Mammary epithelial cell (primary cell): ENCODE measurements at regions of chr17 and their contacts with region 1.

Region 1: GRCh38 chr17:75927286-75927922 is 13.4 kb downstream of the FBF1 start:
- DNase-seq: peak; percentile 9
- H3K4me3 ChIP-seq: no peak overlapping the region
- H3K27ac ChIP-seq: no peak overlapping the region
- H3K4me1 ChIP-seq: peaks cover 9% of the 10 kb centered on the region
- H3K27me3 ChIP-seq: no peaks in the 10 kb centered on the region
- CTCF ChIP-seq: peak in 1 of 2 donors; percentile 47

Region 2: DNA sequence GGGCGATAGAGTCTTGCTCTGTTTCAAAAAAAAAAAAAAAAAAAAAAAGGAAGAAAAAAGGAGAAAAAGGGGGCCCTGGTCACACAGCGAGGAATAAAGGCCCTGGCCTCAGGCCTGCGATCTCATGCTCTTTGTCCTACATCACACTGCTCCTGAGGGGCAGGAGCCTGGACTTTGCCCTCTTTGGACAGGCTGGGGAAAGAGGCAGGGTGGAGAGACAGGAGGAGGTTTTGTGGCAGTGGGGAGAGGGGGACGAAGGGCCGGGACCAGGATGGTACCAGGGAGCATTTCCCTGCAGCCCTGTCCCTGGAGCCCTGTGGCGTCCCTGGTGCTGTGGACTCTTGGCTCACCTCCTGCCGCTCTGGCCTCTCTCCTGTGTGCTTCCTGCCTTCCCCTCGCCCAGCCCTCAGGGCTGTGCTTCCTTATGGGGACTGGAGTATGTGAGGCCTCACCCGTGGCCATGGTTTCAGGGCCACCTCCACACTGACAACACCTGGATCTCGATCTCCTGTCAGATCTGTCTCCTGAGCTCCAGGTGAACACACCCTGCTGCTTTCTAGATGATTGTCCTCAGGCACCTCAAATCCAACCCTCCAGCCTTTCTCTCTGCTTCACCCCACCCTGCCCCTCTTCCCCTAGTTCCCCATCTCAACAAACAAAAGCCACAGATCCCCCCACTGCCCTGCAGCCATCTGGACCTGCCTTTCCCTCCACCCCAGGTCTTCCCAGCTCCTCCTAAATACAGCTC is 618.2 kb before region 1 on chr17:
- CTCF ChIA-PET with region 1: no interaction called
- dilution Hi-C with region 1: no loop called
- in situ Hi-C with region 1: no loop called
- intact Hi-C with region 1: no loop called
- DNase-seq: no peak
- H3K4me3 ChIP-seq: no peak overlapping the region
- H3K27ac ChIP-seq: no peak overlapping the region
- H3K4me1 ChIP-seq: no peaks in the 10 kb centered on the region
- H3K27me3 ChIP-seq: no peaks in the 10 kb centered on the region
- CTCF ChIP-seq: no peak

Region 3: DNA sequence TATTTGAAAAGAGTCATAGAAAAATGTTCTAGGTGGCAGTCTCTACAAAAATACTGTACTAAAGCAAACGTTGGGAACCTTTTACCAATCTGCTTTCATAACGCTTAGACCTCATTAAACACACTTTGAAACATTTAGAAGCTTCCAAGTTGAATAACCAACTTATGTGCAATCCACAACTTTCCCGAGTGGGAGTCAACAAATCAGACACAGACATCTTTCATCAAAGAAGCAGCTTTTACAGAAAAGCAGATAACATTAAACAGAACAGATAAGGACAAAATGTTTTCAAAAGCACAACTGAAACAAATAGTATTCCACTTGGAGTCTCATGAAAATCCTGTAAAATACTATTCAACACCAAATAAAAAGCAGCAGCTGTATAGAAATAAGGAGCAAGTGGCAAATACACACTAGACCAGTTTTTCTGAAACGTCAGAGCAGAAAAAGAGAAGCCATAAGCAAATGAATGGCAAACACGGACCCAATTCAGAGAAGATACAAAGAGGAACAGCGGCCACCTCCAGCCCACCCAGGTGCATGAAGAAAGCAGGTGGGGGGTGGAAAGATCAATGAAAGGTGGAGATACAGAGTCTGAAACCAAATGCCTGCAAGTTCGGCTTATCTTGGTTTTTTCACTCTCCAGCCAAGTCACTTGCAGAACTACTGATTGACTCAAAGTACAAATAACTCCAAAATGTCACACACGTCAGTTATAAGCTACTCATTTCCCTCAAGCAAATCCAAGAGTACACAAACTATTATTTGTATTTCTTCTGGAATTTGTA is 31.8 kb after region 1 on chr17:
- CTCF ChIA-PET with region 1: interaction called, 21 read pairs
- dilution Hi-C with region 1: no loop called
- in situ Hi-C with region 1: no loop called
- intact Hi-C with region 1: no loop called
- DNase-seq: no peak
- H3K4me3 ChIP-seq: no peak overlapping the region
- H3K27ac ChIP-seq: no peak overlapping the region
- H3K4me1 ChIP-seq: no peaks in the 10 kb centered on the region
- H3K27me3 ChIP-seq: no peaks in the 10 kb centered on the region
- CTCF ChIP-seq: no peak

Region 4: DNA sequence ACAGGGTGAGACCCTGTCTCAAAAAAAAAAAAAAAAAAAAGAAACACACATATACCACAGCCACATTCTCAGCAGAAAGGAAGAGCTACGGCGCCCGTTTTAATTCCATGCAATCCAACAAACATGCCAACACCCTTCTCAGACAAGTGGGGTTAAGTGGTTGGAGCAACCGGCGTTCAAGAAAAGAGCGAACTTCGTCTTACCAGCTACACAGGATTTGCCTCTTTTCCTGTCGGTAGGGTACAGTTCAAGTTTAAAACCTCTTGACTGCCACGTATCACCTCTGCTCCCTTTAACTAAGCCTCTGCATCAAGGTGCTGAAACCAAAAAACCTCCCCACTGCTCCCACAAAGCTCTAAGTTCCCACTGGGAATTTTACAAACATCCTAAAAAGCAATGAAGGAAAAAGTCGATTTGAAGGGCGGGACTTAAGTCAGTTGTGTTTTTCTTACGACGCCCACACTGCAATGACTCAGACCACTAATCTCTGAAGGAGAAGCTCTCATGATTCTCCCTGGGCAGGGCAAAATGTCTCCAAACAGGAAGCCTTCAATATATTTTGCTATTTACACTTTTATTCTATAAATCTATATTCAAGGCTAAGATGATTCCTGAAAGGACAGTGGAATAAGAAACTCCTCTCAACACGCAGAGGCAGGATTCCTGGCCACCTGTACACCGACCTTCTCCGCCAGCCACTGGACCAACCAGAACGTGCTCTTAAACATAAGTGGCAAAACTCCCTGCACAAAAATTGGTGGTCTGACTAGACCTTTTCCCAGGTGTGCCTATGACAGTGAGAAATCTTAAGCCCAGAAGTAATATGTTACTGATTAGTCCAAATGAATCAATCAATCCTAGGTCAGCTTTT is 126.1 kb after region 1 on chr17:
- CTCF ChIA-PET with region 1: no interaction called
- dilution Hi-C with region 1: loop called (anchors 5 kb)
- in situ Hi-C with region 1: no loop called
- intact Hi-C with region 1: no loop called
- DNase-seq: peak; percentile 44
- H3K4me3 ChIP-seq: no peak overlapping the region
- H3K27ac ChIP-seq: peak overlapping the region; percentile 35
- H3K4me1 ChIP-seq: peaks cover 17% of the 10 kb centered on the region
- H3K27me3 ChIP-seq: no peaks in the 10 kb centered on the region
- CTCF ChIP-seq: no peak